ENCODE measurements at regions of chr6 and their contacts with region 1.

Region 1: DNA sequence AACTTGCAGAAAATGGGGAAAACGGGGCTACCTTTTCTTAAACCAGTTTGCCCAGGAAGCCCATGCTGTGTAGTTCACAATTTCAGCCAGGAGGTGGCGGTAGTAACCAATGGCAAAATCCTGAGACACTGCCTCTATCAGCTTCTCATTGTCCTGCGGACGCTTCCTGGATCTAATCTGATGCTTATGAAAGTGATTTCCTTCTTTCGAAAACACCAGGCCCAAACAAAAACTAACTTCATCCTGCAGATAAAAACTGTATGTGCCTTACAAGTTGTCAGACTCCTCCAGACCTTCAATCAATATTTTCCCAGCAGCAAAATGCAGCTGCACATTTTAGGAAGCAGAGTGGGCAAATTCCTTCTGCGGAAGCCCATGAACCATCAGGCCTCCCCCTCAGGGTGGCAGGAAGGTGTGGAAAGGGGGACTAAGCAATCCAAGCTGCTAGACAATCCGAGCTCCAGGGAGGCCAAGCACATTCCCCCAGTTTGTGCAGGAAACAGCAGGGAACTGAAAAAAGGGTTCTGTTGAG is 88.5 kb downstream of the LY86 start:
- DNase-seq: peak; percentile 75
- H3K4me3 Mint-ChIP-seq: no peak overlapping the region
- H3K27ac Mint-ChIP-seq: no peak overlapping the region
- H3K4me1 Mint-ChIP-seq: peaks cover 15% of the 10 kb centered on the region
- H3K27me3 Mint-ChIP-seq: peaks cover 1% of the 10 kb centered on the region

Region 2: GRCh38 chr6:6712258-6712999 is 35.5 kb after region 1 on chr6:
- intact Hi-C with region 1: loop called (anchors 5 kb)
- DNase-seq: no peak
- H3K4me3 Mint-ChIP-seq: no peak overlapping the region
- H3K27ac Mint-ChIP-seq: no peak overlapping the region
- H3K4me1 Mint-ChIP-seq: peaks cover 20% of the 10 kb centered on the region
- H3K27me3 Mint-ChIP-seq: peaks cover 29% of the 10 kb centered on the region

Region 3: DNA sequence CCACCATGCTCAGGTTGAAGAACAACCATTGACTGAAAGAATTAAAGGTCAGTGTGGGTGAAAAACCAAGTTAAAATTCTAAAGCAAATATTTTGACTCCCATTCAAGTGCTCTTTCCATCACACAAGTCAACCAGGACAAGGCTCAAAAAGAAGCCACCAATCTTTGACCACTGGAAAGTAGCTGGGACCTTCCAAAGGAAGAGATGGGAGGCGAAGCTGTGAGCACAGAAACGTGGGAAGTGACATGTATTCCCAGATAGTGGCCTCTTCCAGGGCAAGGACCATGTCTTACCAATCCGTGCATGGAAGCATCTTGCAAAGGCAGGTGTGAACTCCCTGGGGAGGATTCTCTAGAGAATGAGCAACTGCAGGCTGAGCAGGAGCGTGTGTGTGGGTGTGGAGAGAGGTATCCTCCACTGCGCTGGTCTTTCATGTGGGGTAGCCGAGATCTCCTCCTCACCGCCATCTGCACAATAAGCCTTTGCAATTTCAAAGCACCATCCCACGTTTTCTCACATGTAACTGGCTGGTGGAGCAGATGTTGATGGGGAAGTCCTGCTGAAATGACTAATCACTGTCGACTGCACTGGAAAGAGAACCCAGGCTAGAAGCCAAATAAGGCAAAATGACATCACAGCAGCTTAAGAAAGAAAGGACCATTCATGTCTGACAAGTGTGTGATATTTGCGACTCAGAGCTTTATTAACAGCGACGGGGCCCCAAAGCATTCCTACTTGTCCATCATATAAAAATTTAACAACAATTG is 241.4 kb after region 1 on chr6:
- intact Hi-C with region 1: loop called (anchors 5 kb)
- DNase-seq: peak; percentile 24
- H3K4me3 Mint-ChIP-seq: no peak overlapping the region
- H3K27ac Mint-ChIP-seq: peak overlapping the region; percentile 16
- H3K4me1 Mint-ChIP-seq: peaks cover 24% of the 10 kb centered on the region
- H3K27me3 Mint-ChIP-seq: peaks cover 31% of the 10 kb centered on the region

Region 4: GRCh38 chr6:7615611-7616383 is 938.8 kb after region 1 on chr6:
- intact Hi-C with region 1: loop called (anchors 5 kb)
- DNase-seq: no peak
- H3K4me3 Mint-ChIP-seq: no peak overlapping the region
- H3K27ac Mint-ChIP-seq: no peak overlapping the region
- H3K4me1 Mint-ChIP-seq: peaks cover 17% of the 10 kb centered on the region
- H3K27me3 Mint-ChIP-seq: no peaks in the 10 kb centered on the region

Measured in activated T-helper 2 cell treated with anti-CD3 and anti-CD28 coated beads, Interferon-gamma antibody, Interleukin-2, Interleukin-4, amounts not matched to agents 10 μg/mL and 5 μg/mL and 100 μg/mL, durations not matched to agents 14 hours and 24 hours and 36 hours (primary cell).